ENCODE measurements at regions of chr19 and their contacts with region 1.

Region 1: GRCh38 chr19:47210689-47211316 is 20.2 kb downstream of the BBC3 start:
- DNase-seq: peak; percentile 76
- ATAC-seq: peak; percentile 65 to 77

Region 2: DNA sequence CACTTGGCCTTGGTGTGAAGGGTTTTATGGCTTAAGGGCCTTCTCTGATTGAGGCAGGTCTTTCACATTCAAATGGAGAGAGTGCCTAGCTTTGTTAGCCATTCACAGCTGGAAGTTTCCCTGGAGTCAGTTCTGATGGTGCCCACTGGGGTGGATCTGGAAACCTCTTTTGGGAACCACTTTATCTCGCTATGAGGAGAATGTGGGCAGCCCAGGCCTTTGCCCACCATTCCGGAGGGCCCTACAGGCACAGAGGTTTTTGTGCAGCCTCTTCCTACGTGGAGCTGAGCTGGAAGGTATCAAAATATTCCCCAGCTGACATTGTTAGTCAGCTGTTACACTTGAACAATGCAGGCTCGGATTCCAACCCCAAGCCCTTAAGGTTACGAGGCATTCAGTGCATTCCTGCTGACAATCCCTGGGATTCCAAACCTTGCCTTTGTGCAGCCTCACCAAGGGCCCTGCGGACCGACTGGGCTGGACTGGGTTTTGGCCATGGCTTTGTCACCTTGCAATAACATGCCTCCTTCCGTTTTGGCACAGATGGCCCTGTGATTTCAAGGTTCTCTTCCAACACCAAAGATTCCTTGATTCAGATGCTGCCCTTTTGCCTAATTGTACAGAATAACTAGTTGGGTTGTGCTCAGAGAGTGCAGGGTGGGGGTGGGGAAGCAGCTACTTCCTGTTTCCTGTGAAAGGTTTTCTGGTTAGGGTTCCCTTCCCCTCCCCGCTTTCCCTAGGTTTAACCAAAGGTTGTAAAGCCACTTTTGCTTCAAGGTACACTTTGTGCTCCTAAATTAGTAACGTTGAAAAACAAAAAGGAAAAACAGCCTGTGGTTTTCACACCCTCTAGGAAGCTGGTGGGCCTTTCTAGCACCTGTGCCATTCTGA is 53.1 kb before region 1 on chr19:
- intact Hi-C with region 1: loop called in 1 of 2 experiments (anchors 10 kb)
- DNase-seq: peak; percentile 71
- ATAC-seq: peak; percentile 63 to 79

Region 3: DNA sequence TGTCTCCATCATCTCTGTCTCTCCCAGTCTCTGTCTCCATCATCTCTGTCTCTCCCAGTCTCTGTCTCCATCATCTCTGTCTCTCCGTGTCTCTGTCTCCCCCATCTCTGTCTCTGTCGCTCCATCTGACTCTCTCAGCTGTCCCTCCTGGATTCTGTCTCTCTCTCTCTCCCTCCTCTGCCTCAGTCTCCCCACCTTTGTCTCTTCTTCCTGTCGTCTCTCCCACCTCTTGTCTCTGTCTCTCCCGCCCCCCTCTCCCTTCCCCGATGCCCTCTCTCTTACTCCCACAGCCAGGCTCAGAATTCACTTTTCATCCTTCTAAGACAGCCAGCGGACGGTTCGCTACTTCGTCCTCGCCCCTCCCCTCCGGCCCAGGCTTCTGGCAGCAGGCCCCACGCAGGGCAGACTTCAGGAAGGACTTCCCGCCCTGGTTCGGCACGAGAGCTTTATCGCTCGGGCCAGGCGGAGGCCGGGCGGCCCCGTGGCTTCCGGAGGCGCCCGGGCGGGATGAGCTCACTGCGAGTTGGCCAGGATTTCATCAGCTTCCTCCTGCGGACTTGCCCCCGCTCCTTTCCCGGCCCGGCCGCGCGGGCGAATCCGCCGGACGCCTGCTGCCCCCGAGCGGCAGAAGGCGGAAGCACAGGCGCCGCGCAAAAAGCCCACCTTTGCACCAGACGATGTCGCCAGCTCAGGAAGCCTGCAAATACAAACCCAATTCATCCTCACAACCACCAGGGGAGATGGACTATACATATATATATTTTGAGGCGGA is 33.2 kb after region 1 on chr19:
- intact Hi-C with region 1: loop called in 1 of 2 experiments (anchors 1 kb)
- DNase-seq: peak; percentile 95
- ATAC-seq: peak; percentile 92 to 93

Measured in left cardiac atrium (tissue), 4 donors.